MCF 10A (cell line): ENCODE measurements at regions of chr15 and their contacts with region 1.

Region 1: DNA sequence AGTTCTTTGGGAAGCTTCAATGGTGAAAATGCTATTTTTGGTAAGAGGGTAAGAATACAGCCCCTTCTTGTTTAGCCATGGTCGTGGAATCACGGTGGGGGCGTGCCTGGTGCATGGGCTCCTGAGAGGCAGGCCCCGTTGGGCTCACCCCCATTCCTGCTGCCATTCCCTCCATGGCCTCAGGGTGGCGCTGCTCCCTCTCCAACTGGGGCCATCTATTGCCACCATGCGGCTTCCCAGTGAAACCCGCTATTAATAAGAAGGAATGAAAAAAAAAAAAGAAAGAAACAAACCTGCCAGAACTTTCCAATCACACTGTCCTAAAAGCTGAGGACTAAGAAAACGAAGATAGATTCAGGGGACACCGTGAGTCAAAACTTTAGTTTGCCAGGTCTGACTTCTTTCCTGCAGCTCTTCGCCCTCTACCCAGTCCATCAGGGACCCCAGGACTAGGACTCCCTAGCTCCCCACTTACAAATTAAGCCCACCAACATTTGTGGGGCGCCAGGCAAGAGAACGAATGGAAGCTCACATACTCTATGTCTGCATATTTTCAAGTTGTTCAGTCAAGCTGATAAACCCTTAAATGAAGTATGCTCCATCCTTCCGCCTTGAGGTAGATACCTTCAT is 30.6 kb upstream of the ABHD2 start:
- DNase-seq: peak; percentile 87
- H3K4me3 Mint-ChIP-seq: no peak overlapping the region
- H3K27ac Mint-ChIP-seq: no peak overlapping the region
- H3K4me1 Mint-ChIP-seq: no peaks in the 10 kb centered on the region
- H3K27me3 Mint-ChIP-seq: no peaks in the 10 kb centered on the region
- CTCF ChIP-seq: peak; percentile 99

Region 2: GRCh38 chr15:89017370-89018066 is 40.1 kb before region 1 on chr15:
- CTCF ChIA-PET with region 1: interaction called, 10 read pairs
- POLR2A ChIA-PET with region 1: no interaction called
- intact Hi-C with region 1: no loop called
- DNase-seq: peak; percentile 88
- H3K4me3 Mint-ChIP-seq: peak overlapping the region; percentile 57
- H3K27ac Mint-ChIP-seq: peak overlapping the region; percentile 72
- H3K4me1 Mint-ChIP-seq: peaks cover 22% of the 10 kb centered on the region
- H3K27me3 Mint-ChIP-seq: no peaks in the 10 kb centered on the region
- CTCF ChIP-seq: peak; percentile 76

Region 3: DNA sequence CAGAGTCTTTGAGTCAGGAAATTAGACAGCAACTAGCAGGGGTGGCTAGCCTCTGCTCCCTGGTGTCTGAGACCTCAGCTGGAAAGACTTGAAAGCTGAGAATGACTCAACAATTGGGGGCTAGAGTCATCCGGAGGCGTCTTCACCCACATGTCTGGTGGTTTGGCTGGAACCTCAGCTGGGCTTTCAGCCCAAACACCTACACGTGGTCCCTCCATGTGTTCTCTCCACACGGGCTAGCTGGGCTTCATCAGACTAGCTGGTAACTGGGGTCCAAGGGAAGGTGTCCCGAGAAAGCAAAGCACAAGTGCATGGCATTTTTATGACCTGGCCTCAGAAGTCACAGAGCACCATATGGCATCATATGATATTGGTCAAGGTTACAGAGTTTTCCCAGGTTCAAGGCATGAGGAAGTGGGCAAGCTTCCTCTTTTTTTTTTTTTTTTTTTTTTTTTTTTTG is 10.7 kb after region 1 on chr15:
- CTCF ChIA-PET with region 1: interaction called, 33 read pairs
- POLR2A ChIA-PET with region 1: interaction called, 3 read pairs
- intact Hi-C with region 1: no loop called
- DNase-seq: peak; percentile 95
- H3K4me3 Mint-ChIP-seq: no peak overlapping the region
- H3K27ac Mint-ChIP-seq: no peak overlapping the region
- H3K4me1 Mint-ChIP-seq: peaks cover 19% of the 10 kb centered on the region
- H3K27me3 Mint-ChIP-seq: no peaks in the 10 kb centered on the region
- CTCF ChIP-seq: no peak

Region 4: GRCh38 chr15:89112341-89112971 is 54.8 kb after region 1 on chr15:
- CTCF ChIA-PET with region 1: interaction called, 10 read pairs
- POLR2A ChIA-PET with region 1: interaction called, 4 read pairs
- intact Hi-C with region 1: no loop called
- DNase-seq: peak; percentile 49
- H3K4me3 Mint-ChIP-seq: no peak overlapping the region
- H3K27ac Mint-ChIP-seq: peak overlapping the region; percentile 69
- H3K4me1 Mint-ChIP-seq: peaks cover 20% of the 10 kb centered on the region
- H3K27me3 Mint-ChIP-seq: no peaks in the 10 kb centered on the region
- CTCF ChIP-seq: no peak

Region 5: GRCh38 chr15:89136818-89137772 is 79.5 kb after region 1 on chr15:
- CTCF ChIA-PET with region 1: interaction called, 136 read pairs
- POLR2A ChIA-PET with region 1: no interaction called
- intact Hi-C with region 1: no loop called
- DNase-seq: no peak
- H3K4me3 Mint-ChIP-seq: no peak overlapping the region
- H3K27ac Mint-ChIP-seq: no peak overlapping the region
- H3K4me1 Mint-ChIP-seq: peaks cover 5% of the 10 kb centered on the region
- H3K27me3 Mint-ChIP-seq: no peaks in the 10 kb centered on the region
- CTCF ChIP-seq: no peak

Region 6: DNA sequence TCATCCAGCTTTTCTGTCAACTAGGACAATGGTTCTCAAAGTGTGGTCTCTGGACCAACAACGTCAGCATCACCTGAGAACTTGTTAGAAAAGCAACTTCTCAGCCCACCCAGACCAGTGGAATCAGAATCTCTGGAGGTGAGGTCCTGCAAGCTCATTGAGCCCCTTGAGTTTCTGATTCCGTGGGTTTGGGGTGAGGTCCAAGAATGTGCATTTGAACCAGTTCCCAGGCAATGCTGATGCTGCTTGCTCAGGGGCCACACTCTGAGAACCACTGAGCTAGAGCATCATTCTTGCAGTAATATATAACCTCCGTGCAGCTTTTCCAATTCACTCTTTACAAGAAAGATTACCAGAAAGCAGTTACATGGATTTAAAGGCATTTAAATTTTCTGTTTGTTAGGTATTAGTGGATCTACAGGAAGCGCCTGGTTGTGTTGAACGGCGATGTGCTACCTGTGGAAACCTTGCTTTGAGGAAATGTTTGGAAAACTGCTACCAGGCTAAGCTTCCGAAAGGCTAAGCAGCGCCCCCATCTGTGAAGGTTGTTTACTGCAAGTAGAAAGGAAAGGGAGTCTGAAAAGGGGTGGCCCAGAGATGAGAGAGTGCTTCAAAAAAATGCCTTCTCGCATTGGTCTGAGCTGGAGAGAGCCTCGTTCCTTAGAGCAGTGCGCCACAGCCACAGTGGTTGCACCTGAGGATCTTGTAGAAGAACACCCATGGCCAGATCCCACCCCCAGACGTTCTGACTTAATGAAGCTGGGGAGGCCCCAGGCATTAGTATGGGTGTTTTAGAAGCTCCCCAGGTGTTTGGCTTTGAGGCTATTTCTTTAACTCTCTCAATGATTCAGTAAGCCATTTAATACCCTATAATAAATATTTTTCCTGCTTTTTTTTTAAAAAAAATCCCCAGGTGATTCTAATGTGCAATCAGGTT is 113.8 kb after region 1 on chr15:
- CTCF ChIA-PET with region 1: interaction called, 452 read pairs
- POLR2A ChIA-PET with region 1: no interaction called
- intact Hi-C with region 1: loop called (anchors 1 kb)
- DNase-seq: peak; percentile 70
- H3K4me3 Mint-ChIP-seq: no peak overlapping the region
- H3K27ac Mint-ChIP-seq: no peak overlapping the region
- H3K4me1 Mint-ChIP-seq: peaks cover 19% of the 10 kb centered on the region
- H3K27me3 Mint-ChIP-seq: no peaks in the 10 kb centered on the region
- CTCF ChIP-seq: peak; percentile 65

Region 7: DNA sequence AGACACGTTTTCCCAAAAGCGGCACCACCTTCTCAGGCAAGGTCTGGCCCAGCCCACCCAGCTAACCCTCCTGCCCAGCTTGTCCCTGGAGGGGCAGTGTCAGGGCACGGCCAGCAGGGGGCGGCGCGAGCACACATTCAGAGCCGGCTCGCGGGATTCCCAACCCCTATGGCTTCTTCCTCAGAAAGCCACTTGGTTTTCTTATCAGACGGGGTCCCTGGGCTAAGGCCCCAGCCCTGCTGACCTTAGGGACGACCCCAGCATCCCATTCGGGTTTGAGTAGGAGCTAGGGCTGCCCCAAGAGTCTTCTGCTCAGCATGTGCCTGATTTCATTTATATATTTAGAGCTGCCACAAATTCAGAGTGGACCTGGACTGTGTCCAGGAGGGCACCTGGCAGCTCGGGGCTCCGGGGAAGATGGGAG is 149.3 kb after region 1 on chr15:
- CTCF ChIA-PET with region 1: interaction called, 19 read pairs
- POLR2A ChIA-PET with region 1: no interaction called
- intact Hi-C with region 1: no loop called
- DNase-seq: peak; percentile 80
- H3K4me3 Mint-ChIP-seq: peak overlapping the region; percentile 38
- H3K27ac Mint-ChIP-seq: no peak overlapping the region
- H3K4me1 Mint-ChIP-seq: no peaks in the 10 kb centered on the region
- H3K27me3 Mint-ChIP-seq: no peaks in the 10 kb centered on the region
- CTCF ChIP-seq: peak; percentile 95

Region 8: GRCh38 chr15:90143166-90143655 is 1085.6 kb after region 1 on chr15:
- CTCF ChIA-PET with region 1: no interaction called
- POLR2A ChIA-PET with region 1: no interaction called
- intact Hi-C with region 1: no loop called
- DNase-seq: peak; percentile 69
- H3K4me3 Mint-ChIP-seq: no peak overlapping the region
- H3K27ac Mint-ChIP-seq: no peak overlapping the region
- H3K4me1 Mint-ChIP-seq: no peaks in the 10 kb centered on the region
- H3K27me3 Mint-ChIP-seq: no peaks in the 10 kb centered on the region
- CTCF ChIP-seq: peak; percentile 85